ENCODE measurements at regions of chr20 and their contacts with region 1.

Region 1: DNA sequence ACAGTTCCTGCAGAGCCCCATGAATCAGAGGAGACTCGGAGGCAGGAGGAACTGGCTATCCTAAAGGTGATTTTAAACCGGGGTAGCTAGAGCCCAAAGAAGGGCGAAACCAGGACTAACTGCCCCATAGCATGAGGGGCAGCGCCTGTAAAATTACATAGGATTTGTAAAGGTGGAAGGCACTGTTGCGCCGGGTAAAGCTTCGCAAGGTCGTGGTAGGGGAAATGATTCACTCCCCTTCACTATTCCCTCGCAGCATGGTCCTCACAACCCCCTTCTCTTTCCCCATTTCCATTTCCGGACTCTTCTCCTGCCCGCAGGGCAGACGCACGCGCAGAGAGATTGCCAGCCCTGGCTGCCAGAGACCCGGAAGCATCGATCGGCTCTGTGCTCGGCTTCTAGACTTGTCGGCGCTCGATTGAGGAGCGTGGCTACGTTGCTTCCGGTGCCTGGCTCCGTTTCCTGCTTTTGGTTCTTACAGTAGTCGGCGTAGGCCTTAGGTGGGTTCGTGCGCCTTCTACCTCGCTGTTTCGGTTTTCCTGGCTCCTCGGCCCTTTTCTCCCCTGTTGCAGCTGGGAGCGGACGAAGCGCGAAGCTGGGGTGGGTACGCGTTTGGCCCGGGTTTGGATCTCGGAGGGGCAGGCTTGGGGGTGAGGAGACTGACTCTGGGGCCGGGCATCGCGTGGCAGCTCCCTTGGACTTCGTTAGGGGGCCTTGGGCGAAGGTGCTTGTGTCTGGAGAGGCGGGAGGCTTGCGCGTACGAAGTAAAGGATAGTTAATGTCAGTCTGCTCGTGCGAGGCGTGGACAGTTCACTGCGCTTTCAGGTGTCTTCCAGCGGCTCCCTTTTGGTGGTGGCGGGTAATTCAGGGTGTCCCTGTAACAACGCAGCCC is at the start of gene SNRPB2:
- DNase-seq: peak; percentile 93
- H3K4me3 ChIP-seq: peak within 1 kb of the TSS; percentile 78 to 99 (median 96)
- H3K27ac ChIP-seq: peak within 1 kb of the TSS; percentile 75 to 92 (median 87)
- H3K4me1 ChIP-seq: peaks cover 0 to 19% (median 12%) of the 10 kb centered on the region in 4 donors
- H3K27me3 ChIP-seq: peaks cover 29% of the 10 kb centered on the region
- CTCF ChIP-seq: no peak
- EP300 ChIP-seq: no peak
- POLR2A ChIP-seq: peak; percentile 82
- total RNA-seq, gene SNRPB2: 20.3 to 52.1 (median 30.9) TPM

Region 2: DNA sequence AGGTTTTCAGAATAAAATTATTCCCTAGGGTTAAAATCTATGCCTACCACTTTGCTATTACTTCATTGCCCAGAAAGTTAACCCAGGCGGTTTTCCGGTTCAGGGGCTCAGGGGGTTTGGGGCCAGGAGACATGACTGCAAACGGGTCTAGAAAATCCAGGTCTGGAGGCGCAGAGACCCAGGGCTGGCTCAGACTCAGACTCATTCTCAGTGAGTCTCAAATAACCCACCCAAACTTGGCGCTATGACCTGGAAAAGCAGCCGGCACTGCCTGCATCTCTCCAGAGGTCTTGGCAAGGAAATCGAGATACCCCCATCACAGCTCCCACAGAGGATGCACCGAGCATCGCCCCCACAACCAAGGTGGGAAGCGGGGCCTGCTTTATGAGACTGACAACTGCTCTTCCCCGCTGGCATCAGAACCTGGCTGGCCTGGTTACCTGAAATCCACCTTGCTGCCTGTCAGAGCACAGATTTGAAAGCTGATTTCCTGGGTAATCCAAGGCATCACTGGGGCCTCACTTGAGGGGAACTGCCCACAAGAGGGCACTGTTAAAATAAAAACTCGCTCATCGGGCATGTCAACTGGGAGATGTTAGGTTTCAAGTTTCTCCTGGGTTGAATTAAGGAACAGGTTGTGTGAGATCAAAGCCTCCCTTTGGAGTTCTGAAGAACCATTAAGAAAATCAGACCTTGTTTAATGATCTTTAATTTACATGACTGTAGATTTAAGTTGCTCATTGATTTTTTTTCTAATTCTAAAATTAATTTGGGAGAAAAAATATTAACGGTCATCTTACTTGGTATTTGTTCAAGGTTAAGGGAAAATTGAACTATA is 211.6 kb before region 1 on chr20:
- in situ Hi-C with region 1: loop called in 1 of 4 experiments (anchors 25 kb)
- intact Hi-C with region 1: no loop called
- DNase-seq: peak; percentile 45
- H3K4me3 ChIP-seq: no peak overlapping the region
- H3K27ac ChIP-seq: no peak overlapping the region
- H3K4me1 ChIP-seq: no peaks in the 10 kb centered on the region
- H3K27me3 ChIP-seq: no peaks in the 10 kb centered on the region
- CTCF ChIP-seq: peak; percentile 49 to 60 (median 54)
- EP300 ChIP-seq: no peak
- POLR2A ChIP-seq: no peak

Measured in transverse colon (tissue), 4 donors.